Activated CD8-positive, alpha-beta memory T cell treated with anti-CD3 and anti-CD28 coated beads, Interleukin-2, amount 10 ng/mL, durations not matched to agents 7 days and 5 days (primary cell): ENCODE measurements at regions of chr1 and their contacts with region 1.

Region 1: DNA sequence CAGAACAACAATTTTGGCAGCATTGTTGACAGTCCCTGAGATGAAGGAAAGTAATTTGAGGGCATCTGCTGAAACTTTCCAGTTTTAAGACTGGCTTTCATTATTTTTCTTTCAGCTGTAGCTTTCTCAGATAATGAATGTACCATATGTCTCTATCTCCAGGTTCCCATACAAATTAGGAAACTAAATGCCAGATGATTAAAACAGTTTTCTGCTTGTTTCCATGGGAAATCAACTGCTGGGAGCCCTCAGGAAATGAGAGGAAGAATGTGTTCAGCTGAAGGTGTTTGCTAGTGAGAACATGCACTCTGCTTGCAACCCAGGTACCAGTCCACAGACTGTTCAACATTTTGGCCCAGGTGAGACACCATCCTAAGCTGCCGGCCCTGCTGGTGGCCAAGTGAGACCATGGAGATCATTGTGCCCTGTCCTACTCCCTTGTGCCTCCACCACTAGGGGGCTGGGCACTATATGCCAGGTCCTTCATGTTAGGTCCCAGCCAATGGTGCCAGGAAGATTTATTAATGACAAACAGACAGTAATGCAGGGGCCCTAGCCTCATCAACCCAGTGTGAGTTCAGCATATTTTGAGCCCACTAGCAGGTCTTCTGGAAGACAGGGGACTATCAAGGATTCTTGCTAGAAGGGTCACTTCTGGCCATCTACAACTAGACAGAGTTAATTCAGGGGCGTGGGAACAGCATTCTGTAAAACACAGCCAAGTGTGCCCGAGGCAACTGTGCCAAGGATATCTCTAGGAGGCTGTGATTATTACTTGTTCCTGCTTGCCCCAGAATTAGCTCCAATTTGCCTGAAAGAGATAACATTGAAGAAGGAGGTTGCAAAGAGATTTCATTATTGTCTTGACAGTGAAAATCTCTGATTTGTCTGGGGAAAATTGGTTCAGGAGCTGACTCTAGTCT is 17.0 kb upstream of the LRRC8C start:
- DNase-seq: no peak
- ATAC-seq: no peak
- H3K4me3 Mint-ChIP-seq: no peak overlapping the region
- H3K27ac Mint-ChIP-seq: no peak overlapping the region
- H3K4me1 Mint-ChIP-seq: peaks cover 62% of the 10 kb centered on the region
- H3K27me3 Mint-ChIP-seq: no peaks in the 10 kb centered on the region

Region 2: GRCh38 chr1:89605692-89606091 is 10.2 kb before region 1 on chr1:
- CTCF ChIA-PET with region 1: interaction called, 16 read pairs
- DNase-seq: no peak
- ATAC-seq: no peak
- H3K4me3 Mint-ChIP-seq: no peak overlapping the region
- H3K27ac Mint-ChIP-seq: peak overlapping the region; percentile 98
- H3K4me1 Mint-ChIP-seq: peaks cover 90% of the 10 kb centered on the region
- H3K27me3 Mint-ChIP-seq: no peaks in the 10 kb centered on the region

Region 3: DNA sequence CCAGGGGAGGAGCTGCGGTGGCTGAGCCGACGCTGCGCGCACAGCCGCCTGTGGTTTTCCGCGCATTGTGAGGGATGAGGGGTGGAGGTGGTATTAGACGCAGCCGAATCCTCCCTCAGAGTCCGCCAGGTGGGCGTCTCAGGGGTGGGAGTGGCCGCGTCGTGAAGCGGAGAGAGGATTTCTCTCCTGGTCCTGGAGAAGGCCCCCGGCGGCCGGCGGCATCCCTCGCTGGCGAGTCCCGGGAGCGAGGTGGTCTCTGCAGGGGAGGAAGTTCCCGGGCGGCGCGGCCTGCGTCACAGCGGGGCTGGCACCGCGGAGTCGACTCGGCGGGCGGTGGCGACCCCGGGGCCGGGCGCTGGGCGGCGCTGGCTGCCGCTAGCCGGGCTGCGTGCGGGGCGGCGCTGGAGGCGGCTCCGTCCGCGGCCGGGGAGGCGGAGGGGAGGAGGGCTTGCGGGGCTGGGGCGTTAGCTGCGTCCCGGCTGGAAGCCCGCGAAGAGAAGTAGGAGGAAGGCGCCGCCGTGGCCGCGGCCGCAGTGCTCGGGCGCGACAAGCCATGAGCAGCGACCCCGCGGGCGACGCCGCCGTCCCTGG is 16.8 kb after region 1 on chr1 and contains the start of gene LRRC8C:
- CTCF ChIA-PET with region 1: interaction called, 98 read pairs
- DNase-seq: peak; percentile 91
- ATAC-seq: peak; percentile 81
- H3K4me3 Mint-ChIP-seq: peak within 1 kb of the TSS; percentile 93
- H3K27ac Mint-ChIP-seq: peak within 1 kb of the TSS; percentile 94
- H3K4me1 Mint-ChIP-seq: peaks cover 72% of the 10 kb centered on the region
- H3K27me3 Mint-ChIP-seq: no peaks in the 10 kb centered on the region
- total RNA-seq, gene LRRC8C: 43.5 to 44.3 TPM

Region 4: GRCh38 chr1:89657886-89658285 is 41.9 kb after region 1 on chr1:
- CTCF ChIA-PET with region 1: interaction called, 15 read pairs
- DNase-seq: no peak
- ATAC-seq: peak; percentile 75
- H3K4me3 Mint-ChIP-seq: peak overlapping the region; percentile 19
- H3K27ac Mint-ChIP-seq: peak overlapping the region; percentile 80
- H3K4me1 Mint-ChIP-seq: peaks cover 86% of the 10 kb centered on the region
- H3K27me3 Mint-ChIP-seq: no peaks in the 10 kb centered on the region